ENCODE measurements at regions of chr11 and their contacts with region 1.

Region 1: GRCh38 chr11:62726915-62727763 is at the start of gene HNRNPUL2:
- DNase-seq: peak; percentile 99
- H3K4me3 Mint-ChIP-seq: peak within 1 kb of the TSS; percentile 87
- H3K27ac Mint-ChIP-seq: peak within 1 kb of the TSS; percentile 97
- H3K4me1 Mint-ChIP-seq: peaks cover 50% of the 10 kb centered on the region
- H3K27me3 Mint-ChIP-seq: no peaks in the 10 kb centered on the region
- total RNA-seq, gene HNRNPUL2: 65.1 to 65.3 TPM

Region 2: GRCh38 chr11:62645956-62646824 is 80.9 kb before region 1 on chr11 and contains the start of gene GANAB:
- CTCF ChIA-PET with region 1: no interaction called
- POLR2A ChIA-PET with region 1: interaction called, 13 read pairs
- DNase-seq: peak; percentile 99
- H3K4me3 Mint-ChIP-seq: peak within 1 kb of the TSS; percentile 99
- H3K27ac Mint-ChIP-seq: peak within 1 kb of the TSS; percentile 94
- H3K4me1 Mint-ChIP-seq: peaks cover 47% of the 10 kb centered on the region
- H3K27me3 Mint-ChIP-seq: no peaks in the 10 kb centered on the region
- total RNA-seq, gene GANAB: 278 to 284 TPM

Region 3: DNA sequence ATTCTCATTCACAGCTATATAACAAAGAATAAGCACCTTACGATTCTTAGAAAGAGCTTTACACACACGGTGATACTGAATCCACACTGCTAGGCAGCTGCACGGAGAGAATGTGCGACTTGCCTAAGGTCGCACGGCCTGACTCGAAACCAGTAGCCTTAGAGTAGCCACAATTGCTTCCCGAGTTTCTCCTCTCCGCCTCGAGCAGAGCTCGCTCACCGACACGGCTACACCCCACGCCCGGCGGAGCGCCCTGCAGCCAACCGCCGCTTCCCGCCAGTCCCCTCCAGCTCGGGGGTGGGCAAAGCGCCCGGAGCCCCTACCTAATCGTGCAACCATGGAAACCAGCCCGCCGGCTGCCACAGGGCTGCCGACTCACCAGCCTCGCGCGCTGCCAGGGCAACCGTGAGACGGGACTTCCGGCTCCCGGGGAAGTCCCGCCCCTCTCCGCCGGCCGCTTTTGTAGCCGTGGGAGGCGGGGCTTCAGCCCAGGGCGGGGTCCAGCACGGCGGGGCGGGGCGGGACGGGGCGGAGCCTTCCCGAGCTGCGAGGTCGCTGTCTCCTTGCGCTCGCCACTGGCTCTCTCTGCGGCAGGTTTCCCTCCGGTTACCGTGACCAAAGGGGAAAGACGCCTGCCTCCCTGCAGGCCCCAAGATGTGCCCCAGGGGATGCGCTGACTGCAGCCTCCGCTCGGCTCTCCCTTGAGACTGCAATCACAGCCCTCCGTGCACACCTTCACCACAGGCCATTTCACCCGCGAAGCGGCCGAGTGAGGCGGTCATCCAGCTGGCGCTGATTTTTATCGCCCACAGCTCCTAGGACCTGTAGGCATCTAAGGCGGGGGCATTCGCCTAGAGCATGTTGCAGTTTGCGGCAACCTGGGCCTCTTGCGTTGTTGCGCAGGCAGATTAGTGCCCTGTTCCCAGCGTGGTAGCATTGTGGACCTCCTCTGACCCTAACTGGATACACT is 21.0 kb before region 1 on chr11:
- CTCF ChIA-PET with region 1: interaction called, 11 read pairs
- POLR2A ChIA-PET with region 1: interaction called, 234 read pairs
- DNase-seq: peak; percentile 96
- H3K4me3 Mint-ChIP-seq: peak overlapping the region; percentile 92
- H3K27ac Mint-ChIP-seq: peak overlapping the region; percentile 69
- H3K4me1 Mint-ChIP-seq: peaks cover 56% of the 10 kb centered on the region
- H3K27me3 Mint-ChIP-seq: no peaks in the 10 kb centered on the region

Region 4: DNA sequence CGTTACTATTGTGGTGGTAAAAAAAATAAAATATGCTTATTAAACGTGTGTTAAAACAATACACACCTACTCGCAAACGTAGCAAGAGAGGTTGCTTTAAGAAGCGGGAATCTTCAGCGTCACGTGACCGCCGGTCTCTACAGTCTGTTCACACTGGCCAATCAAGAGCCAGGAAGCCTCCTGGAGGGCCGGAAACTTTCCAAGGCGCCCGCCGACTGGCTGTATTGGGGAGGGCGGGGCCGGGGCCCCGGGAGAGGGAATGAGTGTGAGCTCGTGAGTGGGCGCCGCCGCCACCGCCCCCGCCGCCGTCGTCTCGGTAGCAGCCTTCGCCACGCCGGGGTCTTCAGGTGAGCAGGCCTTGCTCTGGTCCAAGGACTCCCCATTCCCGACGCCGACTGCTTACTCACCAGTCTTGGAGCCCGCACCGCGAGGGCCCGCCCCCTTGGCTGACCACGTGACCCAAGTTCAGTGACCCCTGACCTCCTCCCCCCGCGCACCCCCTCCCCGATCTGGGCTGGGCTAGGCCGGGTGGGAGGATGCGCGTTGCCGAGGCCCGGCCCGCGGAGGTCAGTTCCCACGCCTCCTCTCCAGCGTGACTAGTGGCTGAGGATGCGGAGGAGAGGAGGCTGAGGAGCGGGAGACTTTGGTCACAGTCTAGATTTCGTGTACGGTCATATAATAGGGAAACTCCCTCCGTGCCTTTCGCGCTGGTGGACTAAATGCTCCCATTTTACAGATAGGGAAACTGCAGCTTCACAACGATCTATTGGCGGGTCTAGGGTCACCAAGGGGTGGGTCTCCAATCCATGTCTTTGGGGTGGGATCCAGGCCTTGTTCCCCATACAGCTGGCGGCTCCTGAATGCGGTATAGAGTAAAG is 44.2 kb after region 1 on chr11 and contains the start of gene TAF6L:
- CTCF ChIA-PET with region 1: interaction called, 7 read pairs
- POLR2A ChIA-PET with region 1: interaction called, 28 read pairs
- DNase-seq: peak; percentile 96
- H3K4me3 Mint-ChIP-seq: peak within 1 kb of the TSS; percentile 87
- H3K27ac Mint-ChIP-seq: peak within 1 kb of the TSS; percentile 88
- H3K4me1 Mint-ChIP-seq: peaks cover 30% of the 10 kb centered on the region
- H3K27me3 Mint-ChIP-seq: no peaks in the 10 kb centered on the region
- total RNA-seq, gene TAF6L: 15.2 to 16.0 TPM

Region 5: DNA sequence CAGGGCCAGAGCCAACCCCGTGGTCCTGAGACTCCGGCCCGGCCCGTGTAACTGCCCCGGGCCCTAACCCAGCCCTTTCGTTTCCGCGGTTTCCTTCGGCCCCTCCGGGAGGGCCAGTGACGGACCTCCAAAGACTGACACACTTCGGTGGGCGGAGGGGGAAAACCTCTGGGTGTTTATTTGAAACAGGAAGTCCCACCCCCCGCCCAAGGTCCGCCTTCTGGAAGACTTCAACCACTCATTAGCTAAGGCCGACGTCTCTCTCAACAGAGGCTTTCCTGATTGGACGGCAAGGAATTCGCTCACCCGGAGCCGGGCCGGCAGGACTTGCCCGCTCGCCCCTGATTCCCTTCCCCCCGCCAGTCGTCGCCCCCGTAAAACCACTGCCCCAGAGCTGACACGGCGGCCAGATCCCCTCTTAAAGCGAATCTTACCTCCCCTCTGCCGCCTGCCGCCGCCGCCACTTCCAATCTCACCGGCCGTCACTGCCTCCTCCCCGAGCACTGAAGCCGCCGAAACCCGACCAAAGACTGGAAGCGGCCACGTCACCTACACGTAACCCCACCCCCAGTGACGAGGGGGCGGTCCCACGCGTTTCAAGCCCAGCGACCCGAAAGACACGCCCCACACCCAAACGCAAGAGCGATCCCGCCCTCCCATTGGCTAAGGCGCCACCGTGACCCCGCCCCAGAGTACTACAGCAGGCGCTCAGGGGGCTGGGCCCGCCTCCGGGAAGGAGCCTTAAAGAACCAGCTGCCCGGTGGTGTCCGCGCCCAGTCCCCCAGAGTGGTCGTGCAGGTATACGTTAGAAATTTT is 104.6 kb after region 1 on chr11 and contains the start of gene STX5:
- CTCF ChIA-PET with region 1: interaction called, 6 read pairs
- POLR2A ChIA-PET with region 1: interaction called, 15 read pairs
- DNase-seq: peak; percentile 100
- H3K4me3 Mint-ChIP-seq: peak within 1 kb of the TSS; percentile 84
- H3K27ac Mint-ChIP-seq: peak within 1 kb of the TSS; percentile 91
- H3K4me1 Mint-ChIP-seq: peaks cover 33% of the 10 kb centered on the region
- H3K27me3 Mint-ChIP-seq: no peaks in the 10 kb centered on the region
- total RNA-seq, gene STX5: 40.6 to 41.6 TPM

Measured in activated CD4-positive, alpha-beta memory T cell treated with anti-CD3 and anti-CD28 coated beads, Interleukin-2, amount 10 ng/mL, durations not matched to agents 7 days and 5 days (primary cell).